H1 (cell line): ENCODE measurements at regions of chr3 and their contacts with region 1.

Region 1: GRCh38 chr3:112136959-112137693 is 4.1 kb upstream of the GCSAM start:
- DNase-seq: peak; percentile 27 to 72
- H3K4me3 ChIP-seq: no peak overlapping the region; a peak in 1 of 8 replicates
- H3K27ac ChIP-seq: peak overlapping the region; percentile 49; the same call in 1 of the 2 replicates
- H3K4me1 ChIP-seq: peaks cover 1 to 8% (median 3%) of the 10 kb centered on the region in 4 experiments; a peak in 4 of 7 replicates
- H3K27me3 ChIP-seq: no peaks in the 10 kb centered on the region
- CTCF ChIP-seq: peak in 2 of 3 experiments; percentile 60 to 74; a peak in 3 of 4 replicates
- EP300 ChIP-seq: no peak
- POLR2A ChIP-seq: 0 out of 3 replicates have a peak, but pooled peaks of 1 of the 2 experiments have one; percentile 18
- RAD21 ChIP-seq: peak; percentile 84 to 87

Region 2: DNA sequence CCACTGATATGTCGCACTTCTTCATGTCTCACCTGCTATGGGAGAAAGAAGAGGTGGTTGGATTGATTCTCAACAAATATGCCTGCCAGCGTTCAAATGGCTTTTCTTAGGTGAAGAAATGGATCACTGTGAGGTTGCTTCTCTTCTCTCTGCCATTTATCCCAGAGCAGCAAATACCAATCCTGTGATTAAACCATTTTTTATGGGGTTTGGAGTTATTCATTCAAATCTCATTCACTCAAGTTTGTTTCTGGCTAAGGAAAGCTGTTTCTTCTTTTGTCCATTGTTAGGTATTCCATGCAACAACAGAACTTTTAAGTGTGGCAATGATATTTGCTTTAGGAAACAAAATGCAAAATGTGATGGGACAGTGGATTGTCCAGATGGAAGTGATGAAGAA is 63.1 kb before region 1 on chr3:
- CTCF ChIA-PET with region 1: no interaction called
- POLR2A ChIA-PET with region 1: no interaction called
- DNase-seq: no peak
- H3K4me3 ChIP-seq: no peak overlapping the region
- H3K27ac ChIP-seq: no peak overlapping the region
- H3K4me1 ChIP-seq: peaks cover 0 to 2% (median 0%) of the 10 kb centered on the region in 4 experiments; a peak in 1 of 7 replicates
- H3K27me3 ChIP-seq: no peaks in the 10 kb centered on the region
- CTCF ChIP-seq: no peak
- EP300 ChIP-seq: no peak
- POLR2A ChIP-seq: no peak
- RAD21 ChIP-seq: no peak

Region 3: GRCh38 chr3:112117841-112118571 is 19.1 kb before region 1 on chr3:
- CTCF ChIA-PET with region 1: interaction called, 11 read pairs
- POLR2A ChIA-PET with region 1: interaction called, 3 read pairs
- DNase-seq: no peak
- H3K4me3 ChIP-seq: no peak overlapping the region
- H3K27ac ChIP-seq: no peak overlapping the region
- H3K4me1 ChIP-seq: peaks cover 0 to 4% (median 2%) of the 10 kb centered on the region in 4 experiments; a peak in 2 of 7 replicates
- H3K27me3 ChIP-seq: no peaks in the 10 kb centered on the region
- CTCF ChIP-seq: peak in 2 of 3 experiments; percentile 7 to 24; a peak in 2 of 4 replicates
- EP300 ChIP-seq: no peak
- POLR2A ChIP-seq: no peak
- RAD21 ChIP-seq: peak; percentile 16 to 28; a peak in 3 of 4 replicates

Region 4: GRCh38 chr3:112519424-112520001 is 382.4 kb after region 1 on chr3:
- CTCF ChIA-PET with region 1: interaction called, 18 read pairs
- POLR2A ChIA-PET with region 1: no interaction called
- DNase-seq: no peak
- H3K4me3 ChIP-seq: no peak overlapping the region
- H3K27ac ChIP-seq: no peak overlapping the region
- H3K4me1 ChIP-seq: no peaks in the 10 kb centered on the region
- H3K27me3 ChIP-seq: no peaks in the 10 kb centered on the region
- CTCF ChIP-seq: peak in 2 of 3 experiments; percentile 63 to 70; a peak in 2 of 4 replicates
- EP300 ChIP-seq: no peak
- POLR2A ChIP-seq: no peak
- RAD21 ChIP-seq: peak; percentile 88 to 89